ENCODE measurements at regions of chr19 and their contacts with region 1.

Region 1: GRCh38 chr19:49665351-49666119 is at the starts of genes BCL2L12 and IRF3:
- DNase-seq: peak; percentile 99
- H3K4me3 ChIP-seq: peak within 1 kb of the TSS; percentile 68 to 95 (median 89)
- H3K27ac ChIP-seq: peak within 1 kb of the TSS; percentile 86 to 96 (median 93)
- H3K4me1 ChIP-seq: peaks cover 15 to 53% (median 37%) of the 10 kb centered on the region in 6 donors
- H3K27me3 ChIP-seq: no peaks in the 10 kb centered on the region
- CTCF ChIP-seq: peak in 3 of 11 experiments; percentile 5 to 15 (median 10)
- POLR2A ChIP-seq: peak in 1 of 3 donors; percentile 43
- total RNA-seq, gene BCL2L12: 7.8 to 26.6 (median 16.3) TPM
- total RNA-seq, gene IRF3: 87.9 to 150 (median 127) TPM

Region 2: GRCh38 chr19:49590071-49590970 is 75.2 kb before region 1 on chr19:
- intact Hi-C with region 1: loop called (anchors 10 kb)
- DNase-seq: peak; percentile 98
- H3K4me3 ChIP-seq: peak overlapping the region; percentile 76 to 99 (median 96)
- H3K27ac ChIP-seq: peak overlapping the region; percentile 85 to 96 (median 92)
- H3K4me1 ChIP-seq: peaks cover 16 to 57% (median 34%) of the 10 kb centered on the region in 6 donors
- H3K27me3 ChIP-seq: no peaks in the 10 kb centered on the region
- CTCF ChIP-seq: peak in 8 of 11 experiments; percentile 11 to 50 (median 18)
- POLR2A ChIP-seq: peak in 1 of 3 donors; percentile 69

Region 3: GRCh38 chr19:49746206-49747091 is 80.9 kb after region 1 on chr19:
- intact Hi-C with region 1: no loop called
- DNase-seq: peak; percentile 83
- H3K4me3 ChIP-seq: peak overlapping the region in 1 of 8 donors; percentile 39
- H3K27ac ChIP-seq: no peak overlapping the region
- H3K4me1 ChIP-seq: no peaks in the 10 kb centered on the region
- H3K27me3 ChIP-seq: no peaks in the 10 kb centered on the region
- CTCF ChIP-seq: no peak
- POLR2A ChIP-seq: no peak

Measured in spleen (tissue), 13 donors.